ENCODE measurements at regions of chr11 and their contacts with region 1.

Region 1: DNA sequence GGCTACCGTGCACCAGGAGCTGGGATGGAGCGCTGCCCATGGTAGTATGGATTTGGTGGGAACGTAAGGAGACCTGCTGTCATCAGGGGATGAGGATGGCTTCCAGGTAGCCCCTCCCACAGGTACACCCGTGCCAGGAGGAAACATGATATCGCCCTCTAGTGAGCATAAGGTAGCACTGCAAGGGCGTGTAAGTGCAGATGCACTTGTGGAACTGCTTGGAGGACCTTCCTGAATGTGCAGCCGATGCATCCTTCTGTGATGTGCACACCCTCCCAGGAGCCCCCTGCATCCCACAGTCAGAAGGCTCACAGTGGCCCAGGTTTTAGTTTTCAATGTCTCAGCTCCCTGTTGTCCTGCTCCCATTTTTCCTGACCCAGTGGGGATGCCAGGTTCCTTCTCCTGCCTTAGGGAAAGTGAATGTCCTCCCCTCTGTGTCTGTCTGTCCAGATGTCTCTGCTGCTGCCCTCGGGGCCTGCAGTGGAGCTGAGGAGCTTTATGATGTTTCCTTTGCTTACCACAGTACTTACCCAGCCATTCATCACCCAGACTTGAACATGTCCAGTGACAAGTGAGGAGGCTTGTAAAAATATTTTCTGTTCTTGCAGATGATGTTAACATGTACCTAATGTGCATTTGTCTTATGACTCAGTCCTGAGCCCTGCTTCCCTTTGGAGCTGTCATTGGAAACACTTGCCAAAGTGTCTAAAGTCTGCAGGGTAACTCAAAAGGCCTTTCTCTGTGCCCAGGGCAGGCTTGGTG is 49.2 kb downstream of the DBX1 start:
- DNase-seq: peak; percentile 70
- ATAC-seq: peak; percentile 77
- H3K4me3 Mint-ChIP-seq: no peak overlapping the region
- H3K27ac Mint-ChIP-seq: no peak overlapping the region
- H3K4me1 Mint-ChIP-seq: peaks cover 7% of the 10 kb centered on the region
- H3K27me3 Mint-ChIP-seq: peaks cover 8% of the 10 kb centered on the region

Region 2: DNA sequence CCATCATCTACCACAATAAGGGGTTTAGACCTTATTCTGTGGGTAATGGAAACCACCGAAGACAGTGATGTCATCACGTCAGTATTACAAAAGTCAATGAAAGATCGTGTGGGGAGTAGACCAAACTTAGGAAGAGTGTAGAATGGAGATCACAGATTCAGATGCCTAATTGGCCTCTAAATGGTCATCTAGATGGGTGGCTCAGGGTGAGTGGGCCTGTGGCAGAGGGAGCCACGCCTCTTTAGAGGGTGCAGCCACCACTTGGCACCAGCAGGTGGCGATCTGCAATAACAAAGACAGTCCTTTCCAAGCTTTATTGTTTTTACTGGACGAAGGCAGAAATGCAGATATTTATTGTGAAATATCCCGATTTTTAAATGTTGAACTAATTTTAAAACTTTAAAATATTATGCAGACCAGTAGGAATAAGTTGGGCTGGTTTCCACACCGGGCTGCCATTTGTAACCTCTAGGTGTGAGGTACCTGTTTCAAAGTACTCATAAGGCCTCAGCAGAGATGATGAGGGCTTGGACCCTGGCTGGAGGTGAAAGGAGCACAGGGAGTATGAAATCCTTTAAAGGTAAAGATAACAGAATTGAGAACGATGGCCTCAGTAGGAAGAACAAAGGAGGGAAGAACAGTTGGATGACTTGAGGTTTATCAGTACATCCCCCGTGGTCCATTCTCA is 172.8 kb before region 1 on chr11:
- CTCF ChIA-PET with region 1: interaction called, 4 read pairs
- POLR2A ChIA-PET with region 1: no interaction called
- intact Hi-C with region 1: loop called in 1 of 2 experiments (anchors 1 kb)
- DNase-seq: peak; percentile 65
- ATAC-seq: peak; percentile 57
- H3K4me3 Mint-ChIP-seq: no peak overlapping the region
- H3K27ac Mint-ChIP-seq: no peak overlapping the region
- H3K4me1 Mint-ChIP-seq: no peaks in the 10 kb centered on the region
- H3K27me3 Mint-ChIP-seq: peaks cover 6% of the 10 kb centered on the region

Region 3: DNA sequence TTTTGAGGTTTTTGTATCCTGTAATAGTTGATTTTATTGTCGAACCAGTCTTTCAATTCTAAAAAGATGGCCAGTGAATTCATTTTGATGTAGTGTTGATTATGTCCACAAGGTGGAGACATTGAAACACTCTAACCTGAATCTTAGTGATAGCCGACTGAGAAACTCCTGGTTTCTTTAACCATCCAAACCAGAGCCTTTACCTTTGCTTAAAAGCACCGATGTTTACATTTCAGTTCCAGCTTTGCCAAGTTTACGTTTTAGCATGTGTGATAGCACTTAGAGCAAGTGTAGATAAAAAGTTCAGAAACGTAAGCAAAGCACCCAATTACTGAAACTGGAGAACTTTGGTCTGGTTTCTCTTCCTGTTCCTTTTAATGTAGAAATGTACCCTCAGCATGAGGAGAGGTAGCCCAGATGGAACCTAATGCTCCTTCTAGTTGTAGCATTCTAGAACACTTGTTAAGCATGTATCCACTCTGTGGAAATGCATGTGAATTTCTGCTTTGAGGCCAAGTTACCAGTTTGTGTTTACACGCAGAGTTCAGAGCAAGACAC is 159.5 kb before region 1 on chr11:
- CTCF ChIA-PET with region 1: interaction called, 22 read pairs
- POLR2A ChIA-PET with region 1: interaction called, 5 read pairs
- intact Hi-C with region 1: loop called (anchors 1 kb)
- DNase-seq: no peak
- ATAC-seq: peak; percentile 36
- H3K4me3 Mint-ChIP-seq: no peak overlapping the region
- H3K27ac Mint-ChIP-seq: no peak overlapping the region
- H3K4me1 Mint-ChIP-seq: peaks cover 8% of the 10 kb centered on the region
- H3K27me3 Mint-ChIP-seq: peaks cover 23% of the 10 kb centered on the region

Region 4: DNA sequence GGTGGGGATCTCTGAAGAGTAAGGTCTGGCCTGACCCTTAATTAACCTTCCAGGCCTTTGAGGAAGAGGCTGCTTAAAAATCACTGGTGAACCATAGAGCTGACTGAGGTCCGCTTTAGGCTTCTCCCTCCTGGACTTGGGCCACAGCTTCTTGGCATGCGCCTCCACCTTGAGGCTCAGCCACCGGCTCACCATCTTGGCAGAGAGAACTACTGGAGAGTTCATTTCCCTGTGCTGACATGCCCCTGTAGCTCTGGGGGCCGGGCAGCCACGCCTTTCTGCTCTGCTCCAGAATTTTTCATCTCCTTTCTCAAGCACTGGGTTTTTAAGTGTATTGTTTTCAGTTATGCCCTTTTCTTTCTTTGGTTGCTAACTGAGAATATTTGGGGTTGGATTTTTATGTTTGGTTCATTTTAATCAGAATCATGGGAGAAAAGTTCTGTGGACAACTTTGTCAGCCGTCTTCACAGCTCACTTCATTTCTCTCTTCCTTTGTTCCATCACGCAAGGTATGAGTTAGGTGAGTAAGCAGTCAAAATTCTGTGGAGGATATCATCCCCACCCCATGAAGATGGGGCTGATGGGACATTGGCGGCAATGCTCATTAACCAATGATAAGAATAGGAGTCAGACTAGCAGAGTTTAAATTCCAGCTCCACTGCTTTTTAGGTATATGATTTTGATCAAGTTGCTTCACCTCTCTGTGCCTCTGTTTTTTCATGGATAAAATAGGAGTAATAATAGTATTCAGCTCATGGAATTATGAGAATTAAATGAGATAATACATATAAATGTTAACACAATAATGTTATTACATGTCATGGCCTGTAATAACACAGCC is 54.8 kb before region 1 on chr11:
- CTCF ChIA-PET with region 1: interaction called, 3 read pairs
- POLR2A ChIA-PET with region 1: no interaction called
- intact Hi-C with region 1: loop called in 1 of 2 experiments (anchors 10 kb)
- DNase-seq: no peak
- ATAC-seq: no peak
- H3K4me3 Mint-ChIP-seq: no peak overlapping the region
- H3K27ac Mint-ChIP-seq: no peak overlapping the region
- H3K4me1 Mint-ChIP-seq: no peaks in the 10 kb centered on the region
- H3K27me3 Mint-ChIP-seq: no peaks in the 10 kb centered on the region

Region 5: DNA sequence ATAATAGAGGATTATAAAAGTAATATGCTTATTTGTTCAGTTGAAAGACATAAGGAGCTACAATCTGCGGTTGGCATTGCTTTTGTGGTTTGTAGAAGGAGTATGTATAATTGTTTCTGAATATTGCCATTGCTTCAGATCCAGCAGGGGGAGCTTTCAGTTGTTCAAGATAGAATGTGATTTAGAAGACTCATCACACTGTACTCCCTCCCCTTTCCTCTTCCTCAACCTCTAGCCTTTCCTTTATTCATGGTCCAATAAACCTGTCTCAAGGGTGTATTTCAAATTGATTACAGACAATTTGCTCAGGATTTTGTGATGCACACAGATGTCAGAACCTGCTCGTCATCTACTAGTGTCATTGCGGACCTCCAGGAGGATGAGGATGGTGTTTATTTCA is 286.2 kb after region 1 on chr11:
- CTCF ChIA-PET with region 1: no interaction called
- POLR2A ChIA-PET with region 1: no interaction called
- intact Hi-C with region 1: no loop called
- DNase-seq: peak; percentile 34
- ATAC-seq: peak; percentile 83
- H3K4me3 Mint-ChIP-seq: no peak overlapping the region
- H3K27ac Mint-ChIP-seq: peak overlapping the region; percentile 5
- H3K4me1 Mint-ChIP-seq: peaks cover 8% of the 10 kb centered on the region
- H3K27me3 Mint-ChIP-seq: no peaks in the 10 kb centered on the region

Region 6: GRCh38 chr11:20647976-20648565 is 537.0 kb after region 1 on chr11:
- CTCF ChIA-PET with region 1: no interaction called
- POLR2A ChIA-PET with region 1: no interaction called
- intact Hi-C with region 1: no loop called
- DNase-seq: peak; percentile 50
- ATAC-seq: no peak
- H3K4me3 Mint-ChIP-seq: no peak overlapping the region
- H3K27ac Mint-ChIP-seq: no peak overlapping the region
- H3K4me1 Mint-ChIP-seq: no peaks in the 10 kb centered on the region
- H3K27me3 Mint-ChIP-seq: peaks cover 9% of the 10 kb centered on the region